AG04449 (cell line): ENCODE measurements at regions of chr2 and their contacts with region 1.

Region 1: GRCh38 chr2:55168221-55169154 is 63.6 kb downstream of the CLHC1 start:
- DNase-seq: no peak
- H3K4me3 ChIP-seq: no peak overlapping the region
- CTCF ChIP-seq: peak; percentile 69

Region 2: GRCh38 chr2:54838585-54839035 is 329.9 kb before region 1 on chr2:
- CTCF ChIA-PET with region 1: interaction called, 30 read pairs
- POLR2A ChIA-PET with region 1: no interaction called
- DNase-seq: no peak
- H3K4me3 ChIP-seq: no peak overlapping the region
- CTCF ChIP-seq: peak; percentile 85

Region 3: GRCh38 chr2:54977149-54977548 is 191.3 kb before region 1 on chr2:
- CTCF ChIA-PET with region 1: interaction called, 12 read pairs
- POLR2A ChIA-PET with region 1: no interaction called
- DNase-seq: no peak
- H3K4me3 ChIP-seq: no peak overlapping the region
- CTCF ChIP-seq: no peak

Region 4: DNA sequence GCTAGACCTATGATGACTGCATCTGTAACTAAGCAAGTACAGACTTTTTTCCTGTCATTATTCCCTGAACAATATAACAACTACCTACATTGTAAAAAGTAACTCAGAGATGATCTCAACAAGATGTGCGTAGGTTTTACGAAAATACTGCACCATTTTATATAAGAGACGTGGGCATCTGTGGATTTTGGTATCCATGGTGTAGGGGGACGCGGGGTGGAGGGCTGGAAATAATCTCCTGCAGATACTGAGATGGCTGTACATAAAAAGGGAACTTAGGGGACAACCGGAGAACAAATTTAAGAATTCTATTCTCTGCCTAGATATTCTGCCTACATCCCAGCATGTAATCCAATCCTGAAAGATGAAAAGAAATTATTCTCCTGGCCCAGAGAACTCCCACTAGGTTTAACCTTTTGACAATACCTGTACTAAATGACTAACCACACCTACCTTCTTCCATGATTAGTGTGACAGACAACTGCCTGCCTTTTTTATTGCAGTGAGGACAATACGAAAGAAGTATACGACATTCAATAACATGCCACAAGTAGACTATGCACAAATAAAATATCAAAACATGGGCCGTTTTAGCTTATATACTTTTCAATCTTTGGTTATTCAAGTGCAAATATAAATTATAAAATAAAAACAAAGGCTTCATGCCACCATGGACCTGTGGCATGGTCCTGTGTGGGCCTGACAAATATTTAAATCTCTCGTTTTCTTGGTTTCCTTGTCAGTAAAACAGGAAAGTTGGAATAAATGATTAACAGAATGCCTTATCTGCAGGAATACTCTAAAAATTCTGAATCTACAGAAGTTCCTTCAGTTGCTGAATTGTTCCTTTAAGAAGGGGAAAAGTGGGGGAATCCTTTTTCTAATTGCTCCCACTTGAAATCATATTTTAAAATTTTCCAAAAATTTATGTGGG is 164.5 kb before region 1 on chr2:
- CTCF ChIA-PET with region 1: interaction called, 109 read pairs
- POLR2A ChIA-PET with region 1: no interaction called
- DNase-seq: no peak
- H3K4me3 ChIP-seq: no peak overlapping the region
- CTCF ChIP-seq: no peak

Region 5: DNA sequence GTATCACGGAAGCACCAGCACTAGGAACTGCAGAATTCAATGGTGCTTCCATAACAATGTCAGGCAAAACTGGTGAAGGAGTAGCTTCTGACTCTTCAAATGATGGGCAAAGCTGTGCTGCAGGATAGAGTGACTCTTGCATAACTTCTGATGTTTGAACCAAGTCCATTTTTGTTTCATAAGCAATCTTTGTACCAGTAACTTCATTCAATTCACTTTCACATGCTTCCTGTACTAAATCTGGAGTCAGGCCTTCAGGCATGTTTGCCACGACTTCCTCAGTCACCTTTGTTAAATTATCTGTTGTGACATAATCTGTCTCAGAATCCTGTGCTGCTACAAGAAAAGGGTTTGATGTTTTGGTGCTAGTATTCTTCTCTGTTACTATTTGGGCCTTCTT is 142.3 kb before region 1 on chr2:
- CTCF ChIA-PET with region 1: interaction called, 22 read pairs
- POLR2A ChIA-PET with region 1: interaction called, 4 read pairs
- DNase-seq: no peak
- H3K4me3 ChIP-seq: no peak overlapping the region
- CTCF ChIP-seq: no peak

Region 6: GRCh38 chr2:55057496-55057895 is 111.0 kb before region 1 on chr2:
- CTCF ChIA-PET with region 1: interaction called, 16 read pairs
- POLR2A ChIA-PET with region 1: no interaction called
- DNase-seq: no peak
- H3K4me3 ChIP-seq: no peak overlapping the region
- CTCF ChIP-seq: no peak

Region 7: GRCh38 chr2:55153584-55154295 is 14.7 kb before region 1 on chr2:
- CTCF ChIA-PET with region 1: interaction called, 27 read pairs
- POLR2A ChIA-PET with region 1: interaction called, 4 read pairs
- DNase-seq: no peak
- H3K4me3 ChIP-seq: no peak overlapping the region
- CTCF ChIP-seq: no peak